ENCODE measurements at regions of chr18 and their contacts with region 1.

Region 1: GRCh38 chr18:49561289-49562193 is at the start of gene LIPG:
- DNase-seq: peak in 2 of 3 donors; percentile 20 to 52
- ATAC-seq: peak; percentile 56 to 60
- H3K4me3 ChIP-seq: peak within 1 kb of the TSS; percentile 33
- H3K27ac ChIP-seq: no peak within 1 kb of the TSS
- H3K4me1 ChIP-seq: peaks cover 5% of the 10 kb centered on the region
- H3K27me3 ChIP-seq: no peaks in the 10 kb centered on the region
- total RNA-seq, gene LIPG: 0.03 to 2.1 (median 0.19) TPM

Region 2: GRCh38 chr18:48222118-48222517 is 1339.4 kb before region 1 on chr18:
- intact Hi-C with region 1: no loop called
- DNase-seq: peak in 1 of 3 donors; percentile 40
- ATAC-seq: peak; percentile 64 to 66
- H3K4me3 ChIP-seq: no peak overlapping the region
- H3K27ac ChIP-seq: no peak overlapping the region
- H3K4me1 ChIP-seq: peaks cover 3% of the 10 kb centered on the region
- H3K27me3 ChIP-seq: no peaks in the 10 kb centered on the region

Region 3: GRCh38 chr18:49858309-49859020 is 296.9 kb after region 1 on chr18:
- intact Hi-C with region 1: loop called (anchors 2 to 10 kb)
- DNase-seq: peak; percentile 54 to 73 (median 73)
- ATAC-seq: peak; percentile 36 to 72
- H3K4me3 ChIP-seq: no peak overlapping the region
- H3K27ac ChIP-seq: no peak overlapping the region
- H3K4me1 ChIP-seq: no peaks in the 10 kb centered on the region
- H3K27me3 ChIP-seq: no peaks in the 10 kb centered on the region